Activated B cell treated with CpG ODN at 0.5 μM for 24 hours (primary cell): ENCODE measurements at regions of chr5 and their contacts with region 1.

Region 1: DNA sequence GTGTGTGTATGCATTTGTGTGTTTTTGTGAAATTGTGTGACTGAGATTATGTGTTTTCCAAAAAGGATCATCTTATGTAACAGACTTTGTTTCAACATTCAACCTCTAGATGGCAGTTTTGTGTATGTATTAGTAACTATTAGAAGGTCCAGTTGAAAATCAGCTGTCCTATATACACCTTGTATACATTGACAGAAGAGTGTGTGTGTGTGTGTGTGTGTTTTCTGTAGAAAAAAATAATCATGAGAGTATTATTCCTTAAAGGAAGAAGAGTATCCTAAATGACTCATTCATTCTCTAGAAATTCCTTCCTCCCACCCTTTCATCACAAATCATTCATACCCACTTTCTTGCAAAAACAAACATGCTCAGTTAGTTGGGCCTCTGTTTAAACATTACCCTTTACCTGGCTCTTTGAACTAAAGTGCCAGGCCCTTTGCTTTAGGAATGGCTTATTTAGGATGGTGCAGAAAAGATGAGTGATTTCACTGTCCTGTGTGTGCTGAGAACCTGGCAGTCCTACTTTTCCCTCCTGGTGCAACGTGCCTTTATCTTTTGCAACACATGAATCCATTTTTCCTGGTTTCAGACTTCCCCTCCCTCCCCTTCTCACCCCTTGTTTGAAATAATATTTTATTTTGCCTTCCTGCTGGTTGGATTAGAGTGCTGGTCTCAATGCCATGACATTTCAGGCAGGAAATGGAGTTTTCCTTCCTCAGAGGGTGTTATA is 152.2 kb downstream of the ARHGAP26 start:
- DNase-seq: no peak
- ATAC-seq: no peak
- H3K4me3 Mint-ChIP-seq: no peak overlapping the region
- H3K27ac Mint-ChIP-seq: no peak overlapping the region
- H3K4me1 Mint-ChIP-seq: peaks cover 7% of the 10 kb centered on the region
- H3K27me3 Mint-ChIP-seq: no peaks in the 10 kb centered on the region
- CTCF ChIP-seq: no peak

Region 2: GRCh38 chr5:142959683-142960657 is 37.6 kb after region 1 on chr5:
- CTCF ChIA-PET with region 1: interaction called, 3 read pairs
- POLR2A ChIA-PET with region 1: no interaction called
- intact Hi-C with region 1: loop called (anchors 2 kb)
- DNase-seq: no peak
- ATAC-seq: no peak
- H3K4me3 Mint-ChIP-seq: no peak overlapping the region
- H3K27ac Mint-ChIP-seq: no peak overlapping the region
- H3K4me1 Mint-ChIP-seq: peaks cover 12% of the 10 kb centered on the region
- H3K27me3 Mint-ChIP-seq: no peaks in the 10 kb centered on the region
- CTCF ChIP-seq: no peak

Region 3: GRCh38 chr5:143008809-143009521 is 86.6 kb after region 1 on chr5:
- CTCF ChIA-PET with region 1: interaction called, 14 read pairs
- POLR2A ChIA-PET with region 1: interaction called, 3 read pairs
- intact Hi-C with region 1: loop called (anchors 1 kb)
- DNase-seq: no peak
- ATAC-seq: peak; percentile 69
- H3K4me3 Mint-ChIP-seq: peak overlapping the region; percentile 30
- H3K27ac Mint-ChIP-seq: peak overlapping the region; percentile 80
- H3K4me1 Mint-ChIP-seq: peaks cover 55% of the 10 kb centered on the region
- H3K27me3 Mint-ChIP-seq: no peaks in the 10 kb centered on the region
- CTCF ChIP-seq: no peak

Region 4: GRCh38 chr5:143279698-143280097 is 357.3 kb after region 1 on chr5:
- CTCF ChIA-PET with region 1: no interaction called
- POLR2A ChIA-PET with region 1: no interaction called
- intact Hi-C with region 1: loop called (anchors 10 kb)
- DNase-seq: no peak
- ATAC-seq: no peak
- H3K4me3 Mint-ChIP-seq: no peak overlapping the region
- H3K27ac Mint-ChIP-seq: no peak overlapping the region
- H3K4me1 Mint-ChIP-seq: peaks cover 24% of the 10 kb centered on the region
- H3K27me3 Mint-ChIP-seq: no peaks in the 10 kb centered on the region
- CTCF ChIP-seq: no peak

Region 5: DNA sequence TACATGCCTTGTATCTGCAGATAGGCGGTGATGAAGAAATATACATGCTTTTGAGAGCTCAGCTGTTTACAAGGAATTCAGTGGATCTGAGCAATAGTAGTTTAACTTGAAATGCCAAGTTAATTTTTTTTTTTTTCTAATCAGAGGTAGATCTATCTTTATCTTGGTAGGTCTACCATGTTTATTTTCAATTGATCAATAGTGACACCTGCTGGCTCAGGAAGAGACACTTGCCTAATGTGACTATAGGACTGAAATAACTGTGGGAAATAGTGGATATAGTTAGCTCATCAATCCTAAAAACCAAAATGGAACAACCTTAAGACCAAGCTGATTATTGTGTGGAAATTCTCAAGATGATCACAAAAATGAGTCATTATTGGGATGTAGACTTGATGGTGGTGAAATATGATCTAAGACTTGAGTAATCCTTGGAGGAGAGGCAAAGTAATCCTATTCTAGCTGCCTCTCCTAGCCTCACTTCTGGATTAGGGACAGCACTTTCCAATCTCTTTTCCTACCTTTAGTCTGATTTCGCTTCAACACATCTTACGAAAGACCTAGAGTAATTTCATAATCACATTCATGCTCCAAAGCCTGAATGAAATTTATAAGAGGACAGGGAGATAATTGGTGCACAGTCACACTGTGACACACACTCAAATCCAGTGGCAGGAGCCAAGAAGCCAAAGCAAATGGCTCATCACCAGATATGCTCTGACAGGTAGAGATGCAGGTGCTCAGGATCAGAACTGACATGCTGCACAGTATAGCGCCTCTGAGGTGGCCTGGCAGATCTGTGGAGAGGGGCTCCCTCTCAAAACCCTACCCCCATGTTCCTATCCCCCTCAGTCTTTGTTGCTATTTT is 1045.9 kb after region 1 on chr5:
- CTCF ChIA-PET with region 1: no interaction called
- POLR2A ChIA-PET with region 1: no interaction called
- intact Hi-C with region 1: loop called (anchors 1 kb)
- DNase-seq: no peak
- ATAC-seq: no peak
- H3K4me3 Mint-ChIP-seq: no peak overlapping the region
- H3K27ac Mint-ChIP-seq: no peak overlapping the region
- H3K4me1 Mint-ChIP-seq: peaks cover 8% of the 10 kb centered on the region
- H3K27me3 Mint-ChIP-seq: no peaks in the 10 kb centered on the region
- CTCF ChIP-seq: no peak

Region 6: GRCh38 chr5:144142139-144142823 is 1219.9 kb after region 1 on chr5:
- CTCF ChIA-PET with region 1: interaction called, 4 read pairs
- POLR2A ChIA-PET with region 1: no interaction called
- intact Hi-C with region 1: loop called (anchors 1 kb)
- DNase-seq: no peak
- ATAC-seq: peak; percentile 90
- H3K4me3 Mint-ChIP-seq: no peak overlapping the region
- H3K27ac Mint-ChIP-seq: peak overlapping the region; percentile 74
- H3K4me1 Mint-ChIP-seq: peaks cover 17% of the 10 kb centered on the region
- H3K27me3 Mint-ChIP-seq: no peaks in the 10 kb centered on the region
- CTCF ChIP-seq: no peak

Region 7: DNA sequence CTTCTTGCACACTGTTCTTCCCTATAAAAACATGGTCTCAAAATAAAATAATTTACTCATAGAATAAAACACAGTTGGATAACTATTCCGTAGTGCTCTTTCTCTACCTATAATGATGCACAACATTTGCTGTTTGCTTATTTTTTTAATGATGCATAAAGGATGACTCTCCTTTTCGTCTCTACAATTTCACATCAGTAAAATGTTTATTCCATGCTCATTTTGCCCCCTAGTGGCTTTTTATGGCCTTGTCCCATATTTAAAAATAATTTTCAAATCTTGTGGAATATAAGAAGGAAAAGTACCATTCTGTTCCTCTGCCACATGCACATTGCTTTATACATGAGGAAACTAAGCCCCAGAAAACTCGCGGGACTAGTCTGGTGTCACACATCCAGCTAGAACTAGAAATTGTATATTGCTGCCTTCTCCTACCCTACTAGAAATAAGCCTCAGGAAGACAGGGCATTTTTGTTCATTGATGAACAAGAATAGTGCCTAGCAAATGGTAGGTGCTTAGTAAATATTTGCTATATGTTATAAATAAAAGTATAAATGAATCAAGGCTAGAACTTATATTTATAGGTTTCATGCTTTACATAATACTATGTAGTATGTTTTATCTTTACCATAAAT is 1261.0 kb after region 1 on chr5:
- CTCF ChIA-PET with region 1: no interaction called
- POLR2A ChIA-PET with region 1: no interaction called
- intact Hi-C with region 1: loop called (anchors 2 kb)
- DNase-seq: no peak
- ATAC-seq: no peak
- H3K4me3 Mint-ChIP-seq: no peak overlapping the region
- H3K27ac Mint-ChIP-seq: no peak overlapping the region
- H3K4me1 Mint-ChIP-seq: peaks cover 20% of the 10 kb centered on the region
- H3K27me3 Mint-ChIP-seq: no peaks in the 10 kb centered on the region
- CTCF ChIP-seq: peak; percentile 74